Heart right ventricle (tissue), 16 donors: ENCODE measurements at regions of chr12 and their contacts with region 1.

Region 1: GRCh38 chr12:71551529-71551928 is 111.9 kb downstream of the LGR5 start:
- DNase-seq: no peak
- ATAC-seq: no peak
- H3K4me3 ChIP-seq: no peak overlapping the region
- H3K27ac ChIP-seq: no peak overlapping the region
- H3K4me1 ChIP-seq: no peaks in the 10 kb centered on the region
- H3K27me3 ChIP-seq: no peaks in the 10 kb centered on the region
- CTCF ChIP-seq: peak in 3 of 9 donors; percentile 17 to 39 (median 21)

Region 2: GRCh38 chr12:71415336-71416231 is 135.9 kb before region 1 on chr12:
- intact Hi-C with region 1: loop called in 2 of 10 experiments (anchors 10 kb)
- DNase-seq: peak in 1 of 2 donors; percentile 29
- ATAC-seq: peak in 5 of 8 donors; percentile 56 to 78 (median 59)
- H3K4me3 ChIP-seq: no peak overlapping the region
- H3K27ac ChIP-seq: no peak overlapping the region
- H3K4me1 ChIP-seq: no peaks in the 10 kb centered on the region
- H3K27me3 ChIP-seq: no peaks in the 10 kb centered on the region
- CTCF ChIP-seq: peak; percentile 42 to 81 (median 75)